Calu3 (cell line): ENCODE measurements at regions of chr17 and their contacts with region 1.

Region 1: DNA sequence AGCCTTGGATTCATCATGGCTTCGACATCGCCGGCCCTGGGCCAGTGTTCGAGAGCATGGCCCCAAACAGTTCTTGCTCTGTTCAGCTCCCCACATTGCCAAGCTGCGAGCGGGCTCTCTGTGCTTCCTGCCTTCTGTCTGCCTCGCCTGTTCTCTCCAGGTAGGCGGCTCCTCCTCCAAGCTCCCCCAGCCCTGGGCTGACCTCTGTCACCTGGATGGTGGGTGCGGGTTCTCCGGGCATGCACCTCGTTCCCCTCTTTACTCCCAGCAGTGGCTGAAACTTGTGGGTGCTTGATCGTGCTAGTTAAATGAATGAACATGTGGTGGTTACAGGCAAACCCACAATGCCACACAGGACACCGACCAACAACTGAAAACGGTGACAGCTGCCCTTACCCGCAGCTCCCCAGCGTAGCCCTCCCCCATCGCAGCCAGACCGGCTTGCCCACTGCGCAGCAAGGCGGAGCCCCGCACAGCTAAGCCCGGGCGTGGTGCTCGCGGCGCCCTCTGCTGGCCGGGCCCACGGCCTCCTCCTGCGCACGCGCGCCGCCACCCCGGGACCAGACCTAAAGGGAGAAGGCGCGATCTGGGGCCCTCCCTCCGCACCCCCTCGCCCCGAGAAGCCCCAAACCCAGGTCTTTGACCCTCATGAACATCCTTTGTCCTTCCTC is 23.0 kb upstream of the EIF1 start:
- DNase-seq: peak; percentile 99
- H3K4me3 Mint-ChIP-seq: peak overlapping the region; percentile 77
- H3K27ac Mint-ChIP-seq: peak overlapping the region; percentile 95
- H3K4me1 Mint-ChIP-seq: peaks cover 65% of the 10 kb centered on the region
- H3K27me3 Mint-ChIP-seq: no peaks in the 10 kb centered on the region
- CTCF ChIP-seq: peak; percentile 94

Region 2: DNA sequence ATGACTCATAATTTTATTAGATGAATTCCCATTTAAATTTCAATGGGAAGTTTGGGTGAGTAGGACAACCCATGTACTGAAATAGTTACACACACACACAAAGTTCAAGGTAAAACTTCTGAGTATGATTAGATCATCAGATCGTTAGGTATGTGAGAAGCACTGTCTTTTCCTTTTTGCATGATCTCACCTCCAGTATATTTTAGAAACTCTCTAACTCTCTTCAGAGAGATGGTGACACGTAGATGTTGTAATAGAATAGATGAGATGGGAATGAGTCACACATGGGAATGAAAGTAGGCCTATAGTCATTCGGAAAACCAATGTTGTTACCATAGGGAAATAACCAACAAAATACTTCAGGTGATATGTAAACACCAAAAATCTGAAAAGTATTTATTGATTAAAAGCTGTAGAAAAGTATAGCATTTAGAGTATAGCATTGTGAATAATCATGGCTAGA is 750.5 kb before region 1 on chr17:
- CTCF ChIA-PET with region 1: interaction called, 12 read pairs
- intact Hi-C with region 1: no loop called
- DNase-seq: no peak
- H3K4me3 Mint-ChIP-seq: peak overlapping the region; percentile 31
- H3K27ac Mint-ChIP-seq: peak overlapping the region; percentile 96
- H3K4me1 Mint-ChIP-seq: peaks cover 84% of the 10 kb centered on the region
- H3K27me3 Mint-ChIP-seq: no peaks in the 10 kb centered on the region
- CTCF ChIP-seq: no peak

Region 3: DNA sequence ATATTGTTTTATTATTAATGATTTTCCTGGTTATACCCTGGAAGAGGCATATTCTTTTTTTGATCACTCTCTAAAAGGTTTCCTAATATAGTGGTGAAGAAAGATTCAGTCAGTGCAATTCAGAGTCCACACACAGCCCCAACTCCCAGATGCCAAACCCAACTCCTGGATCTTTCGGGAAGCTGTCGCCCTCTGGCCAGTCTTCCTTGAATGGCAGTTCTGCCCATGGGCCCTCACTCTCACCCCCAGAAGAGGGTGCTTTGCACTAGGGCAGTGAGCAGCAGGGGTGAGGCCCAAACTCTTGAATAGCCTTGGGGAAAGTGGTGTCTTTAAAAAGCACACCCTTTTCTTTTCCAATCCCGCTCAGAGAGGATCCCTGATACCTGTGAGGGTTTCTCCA is 209.5 kb before region 1 on chr17:
- CTCF ChIA-PET with region 1: no interaction called
- intact Hi-C with region 1: no loop called
- DNase-seq: peak; percentile 56
- H3K4me3 Mint-ChIP-seq: no peak overlapping the region
- H3K27ac Mint-ChIP-seq: no peak overlapping the region
- H3K4me1 Mint-ChIP-seq: no peaks in the 10 kb centered on the region
- H3K27me3 Mint-ChIP-seq: no peaks in the 10 kb centered on the region
- CTCF ChIP-seq: peak; percentile 41

Region 4: GRCh38 chr17:41521574-41522261 is 144.0 kb before region 1 on chr17:
- CTCF ChIA-PET with region 1: interaction called, 15 read pairs
- intact Hi-C with region 1: no loop called
- DNase-seq: peak; percentile 100
- H3K4me3 Mint-ChIP-seq: peak overlapping the region; percentile 95
- H3K27ac Mint-ChIP-seq: peak overlapping the region; percentile 99
- H3K4me1 Mint-ChIP-seq: peaks cover 73% of the 10 kb centered on the region
- H3K27me3 Mint-ChIP-seq: no peaks in the 10 kb centered on the region
- CTCF ChIP-seq: peak; percentile 11

Region 5: DNA sequence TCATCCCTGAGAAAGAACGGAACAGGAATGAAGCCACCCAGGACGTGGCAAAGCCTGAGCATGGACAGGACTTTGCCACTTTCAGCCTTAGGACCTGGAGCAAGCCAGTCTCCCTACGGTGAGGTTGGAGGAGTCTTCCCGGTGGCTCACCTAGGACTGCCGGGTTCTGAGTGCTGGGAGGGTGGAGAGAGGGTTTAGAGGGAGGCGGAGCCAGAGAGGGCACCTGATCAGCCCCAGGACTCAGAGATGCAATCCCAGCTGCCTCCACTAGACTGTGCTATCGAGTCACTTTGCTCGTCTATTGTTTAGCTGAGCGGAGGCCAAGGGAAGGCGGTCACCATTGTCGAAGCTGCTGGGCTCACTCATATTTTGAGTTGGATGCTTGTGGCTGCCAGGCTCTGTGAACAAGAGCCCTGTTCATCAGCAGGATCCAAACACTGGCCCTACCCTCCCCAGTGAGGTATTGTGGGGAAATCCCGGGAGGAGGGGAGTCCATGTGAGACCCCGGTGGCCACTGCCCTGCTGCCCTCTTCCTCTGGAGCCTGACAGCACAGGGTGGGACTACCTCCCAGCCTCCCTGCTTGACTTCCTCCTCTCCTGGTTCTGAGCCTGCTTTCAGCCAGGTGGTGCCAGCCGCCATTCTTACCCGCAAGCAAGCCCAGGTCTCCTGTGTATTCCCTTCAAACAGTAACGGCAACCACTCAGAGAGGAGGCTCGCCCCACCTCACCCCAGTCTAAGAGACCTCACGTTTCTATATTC is 86.0 kb before region 1 on chr17:
- CTCF ChIA-PET with region 1: interaction called, 13 read pairs
- intact Hi-C with region 1: no loop called
- DNase-seq: peak; percentile 96
- H3K4me3 Mint-ChIP-seq: no peak overlapping the region
- H3K27ac Mint-ChIP-seq: no peak overlapping the region
- H3K4me1 Mint-ChIP-seq: peaks cover 47% of the 10 kb centered on the region
- H3K27me3 Mint-ChIP-seq: no peaks in the 10 kb centered on the region
- CTCF ChIP-seq: peak; percentile 93

Region 6: DNA sequence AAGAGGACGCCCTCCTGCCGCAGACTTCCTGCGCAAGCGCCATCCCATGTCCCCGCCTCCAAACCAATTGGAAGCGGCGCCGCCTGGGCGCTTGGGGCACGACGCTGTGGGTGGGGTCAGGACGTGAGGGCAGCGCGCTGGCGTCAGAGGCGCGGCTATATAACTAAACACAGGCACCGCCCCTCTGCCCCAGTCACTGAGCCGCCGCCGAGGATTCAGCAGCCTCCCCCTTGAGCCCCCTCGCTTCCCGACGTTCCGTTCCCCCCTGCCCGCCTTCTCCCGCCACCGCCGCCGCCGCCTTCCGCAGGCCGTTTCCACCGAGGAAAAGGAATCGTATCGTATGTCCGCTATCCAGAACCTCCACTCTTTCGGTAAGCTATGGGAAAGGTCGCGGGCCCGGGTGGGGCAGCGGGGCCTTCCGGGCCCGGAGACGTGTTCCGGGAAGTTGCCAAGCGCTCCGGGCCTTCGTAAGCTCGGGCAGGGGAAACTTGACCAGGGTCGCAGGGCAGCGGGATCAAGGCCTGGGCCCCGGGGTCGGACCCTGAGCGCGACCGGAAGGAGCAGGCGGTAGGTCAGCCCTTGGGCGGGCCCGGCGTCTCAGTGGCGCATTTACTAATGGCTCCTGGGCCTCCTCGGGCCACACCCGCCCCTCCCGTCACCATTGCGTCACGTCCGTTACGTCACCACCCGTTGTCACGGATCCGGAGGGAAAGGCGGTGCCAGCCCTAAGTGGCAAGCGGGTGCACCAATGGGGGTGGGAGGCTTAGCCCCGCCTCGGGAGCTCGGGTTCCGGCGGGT is 23.2 kb after region 1 on chr17 and contains the start of gene EIF1:
- CTCF ChIA-PET with region 1: interaction called, 28 read pairs
- intact Hi-C with region 1: no loop called
- DNase-seq: peak; percentile 100
- H3K4me3 Mint-ChIP-seq: peak within 1 kb of the TSS; percentile 86
- H3K27ac Mint-ChIP-seq: peak within 1 kb of the TSS; percentile 99
- H3K4me1 Mint-ChIP-seq: peaks cover 36% of the 10 kb centered on the region
- H3K27me3 Mint-ChIP-seq: no peaks in the 10 kb centered on the region
- CTCF ChIP-seq: no peak
- total RNA-seq, gene EIF1: 807 and 937 TPM in 2 replicates